Transverse colon (tissue), 4 donors: ENCODE measurements at regions of chr12 and their contacts with region 1.

Region 1: DNA sequence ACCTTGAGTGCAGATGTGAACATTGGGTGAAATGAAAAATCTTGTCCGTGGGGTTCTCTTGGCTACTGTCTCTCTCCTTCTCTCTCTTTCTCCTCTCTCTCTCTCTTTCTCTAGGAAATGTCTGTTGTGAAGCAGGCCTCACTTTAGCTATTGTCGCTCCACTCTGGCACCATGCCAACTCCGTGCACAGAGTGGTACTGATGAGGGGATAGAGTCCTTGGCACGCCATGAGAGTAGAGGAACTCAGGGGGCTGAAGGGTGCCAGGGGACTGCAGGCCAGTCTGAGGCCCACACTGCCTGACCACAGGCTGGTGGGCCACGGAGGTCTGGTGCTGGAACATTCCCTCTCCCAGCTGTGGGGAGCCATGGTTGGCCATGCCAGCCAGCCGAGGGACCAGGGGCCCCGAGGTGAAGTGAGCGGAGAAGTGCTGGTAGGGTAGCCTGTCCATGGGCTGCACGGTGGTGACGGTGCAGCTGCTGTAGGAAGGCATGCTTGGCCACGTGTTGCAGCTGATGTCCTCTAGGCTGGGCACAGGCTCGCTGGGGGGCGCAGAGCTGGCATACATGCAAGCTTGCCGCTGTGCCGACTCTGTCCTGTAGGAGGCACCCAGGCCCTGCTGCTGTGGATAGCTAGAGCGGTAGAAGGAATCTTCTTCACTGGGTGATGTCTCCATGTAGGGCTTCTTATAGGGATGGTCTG is 50.4 kb downstream of the TBX5 start:
- DNase-seq: no peak
- H3K4me3 ChIP-seq: no peak overlapping the region
- H3K27ac ChIP-seq: no peak overlapping the region
- H3K4me1 ChIP-seq: no peaks in the 10 kb centered on the region
- H3K27me3 ChIP-seq: peaks cover 4% of the 10 kb centered on the region
- CTCF ChIP-seq: no peak
- EP300 ChIP-seq: no peak
- POLR2A ChIP-seq: no peak

Region 2: DNA sequence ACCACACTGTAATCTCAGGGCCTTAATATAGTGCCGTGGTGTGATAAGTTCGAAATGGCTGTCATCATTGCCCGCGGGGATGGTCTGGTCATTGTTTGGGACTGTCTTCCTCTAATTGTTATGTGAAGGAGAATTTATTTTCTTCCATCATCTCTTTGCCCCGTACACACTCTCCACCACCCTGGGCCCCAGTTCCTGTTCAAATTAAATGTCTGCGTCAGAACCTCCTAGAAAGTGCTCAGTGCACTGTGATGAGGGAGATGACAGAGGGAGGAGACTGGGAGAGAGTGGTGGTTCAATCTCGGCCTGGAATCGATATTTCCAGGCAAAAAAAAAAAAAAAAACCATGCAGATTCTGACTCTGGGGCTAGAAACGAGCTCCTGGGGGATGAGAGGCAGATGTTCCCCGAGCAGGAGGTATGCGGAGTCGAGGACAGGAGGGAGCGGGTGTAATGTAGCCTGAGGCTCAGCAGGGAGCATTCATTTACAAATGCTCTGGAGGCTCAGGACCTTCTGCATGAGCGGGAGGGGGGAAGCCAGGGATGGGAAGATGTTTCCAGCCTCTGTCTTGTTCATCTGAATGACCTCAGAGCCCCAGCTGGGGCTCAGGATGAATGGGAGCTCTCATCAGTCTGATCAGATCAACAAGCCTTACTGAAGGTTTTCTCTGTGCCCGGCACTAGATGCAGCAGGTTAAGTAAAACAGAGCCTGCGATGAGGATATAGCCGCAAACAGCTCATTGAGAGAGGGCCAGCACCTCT is 169.1 kb before region 1 on chr12:
- in situ Hi-C with region 1: no loop called
- intact Hi-C with region 1: no loop called
- DNase-seq: no peak
- H3K4me3 ChIP-seq: no peak overlapping the region
- H3K27ac ChIP-seq: no peak overlapping the region
- H3K4me1 ChIP-seq: no peaks in the 10 kb centered on the region
- H3K27me3 ChIP-seq: peaks cover 3% of the 10 kb centered on the region
- CTCF ChIP-seq: no peak
- EP300 ChIP-seq: no peak
- POLR2A ChIP-seq: no peak

Region 3: GRCh38 chr12:114316076-114316475 is 39.5 kb before region 1 on chr12:
- in situ Hi-C with region 1: no loop called
- intact Hi-C with region 1: no loop called
- DNase-seq: no peak
- H3K4me3 ChIP-seq: no peak overlapping the region
- H3K27ac ChIP-seq: no peak overlapping the region
- H3K4me1 ChIP-seq: no peaks in the 10 kb centered on the region
- H3K27me3 ChIP-seq: no peaks in the 10 kb centered on the region
- CTCF ChIP-seq: no peak
- EP300 ChIP-seq: no peak
- POLR2A ChIP-seq: no peak

Region 4: GRCh38 chr12:114342656-114343055 is 12.9 kb before region 1 on chr12:
- in situ Hi-C with region 1: no loop called
- intact Hi-C with region 1: loop called (anchors 1 kb)
- DNase-seq: no peak
- H3K4me3 ChIP-seq: no peak overlapping the region
- H3K27ac ChIP-seq: no peak overlapping the region
- H3K4me1 ChIP-seq: no peaks in the 10 kb centered on the region
- H3K27me3 ChIP-seq: peaks cover 3% of the 10 kb centered on the region
- CTCF ChIP-seq: no peak
- EP300 ChIP-seq: no peak
- POLR2A ChIP-seq: no peak

Region 5: DNA sequence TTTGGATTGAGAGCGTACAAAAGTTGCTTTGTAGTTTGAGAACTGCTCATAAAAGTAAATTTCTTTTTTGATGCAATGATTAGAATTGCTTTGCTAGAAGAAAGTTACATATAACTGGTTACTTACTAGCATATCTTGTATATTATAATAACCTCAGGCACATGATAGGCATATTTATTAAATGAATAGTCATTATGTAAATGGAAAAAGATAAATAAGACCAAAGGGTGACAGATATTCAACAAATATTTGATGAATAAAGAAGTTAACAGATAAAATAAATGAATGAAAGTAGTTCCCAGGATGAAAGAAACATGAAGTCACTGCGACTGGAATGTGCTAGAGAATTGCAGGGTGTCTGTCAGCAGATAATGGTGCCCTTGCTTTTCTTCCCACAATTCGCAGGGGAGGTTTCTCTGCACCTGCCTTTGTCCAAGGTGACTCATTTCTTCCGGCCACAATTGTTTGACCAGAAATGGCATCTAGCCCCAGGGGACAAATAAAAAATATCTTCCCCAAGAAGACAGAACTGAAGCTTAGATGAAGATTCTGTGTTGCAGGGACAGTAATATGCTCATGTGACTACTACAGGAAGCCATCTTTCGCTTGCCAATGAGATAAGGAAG is 644.4 kb after region 1 on chr12:
- in situ Hi-C with region 1: no loop called
- intact Hi-C with region 1: no loop called
- DNase-seq: no peak
- H3K4me3 ChIP-seq: no peak overlapping the region
- H3K27ac ChIP-seq: no peak overlapping the region
- H3K4me1 ChIP-seq: no peaks in the 10 kb centered on the region
- H3K27me3 ChIP-seq: no peaks in the 10 kb centered on the region
- CTCF ChIP-seq: no peak
- EP300 ChIP-seq: no peak
- POLR2A ChIP-seq: no peak